Mammary epithelial cell (primary cell): ENCODE measurements at regions of chr13 and their contacts with region 1.

Region 1: DNA sequence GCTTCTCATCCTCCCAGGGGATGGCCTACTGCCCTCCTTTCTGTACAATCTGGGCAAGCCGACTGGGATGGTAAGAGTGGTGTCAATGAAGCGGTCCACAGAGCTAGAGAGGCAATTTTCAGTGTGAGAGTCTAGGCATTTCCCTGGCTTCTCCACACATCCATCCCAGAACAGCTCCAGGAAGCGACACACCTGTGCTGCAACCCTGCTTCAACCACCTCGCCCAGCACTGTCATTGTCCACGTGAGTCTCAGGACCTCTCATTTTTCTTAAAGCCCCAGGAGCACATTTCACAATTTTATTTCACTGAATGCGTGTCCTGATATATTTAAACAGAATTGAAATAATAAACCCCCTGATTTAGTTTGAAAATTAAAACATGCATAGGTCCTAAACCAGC is 15.5 kb upstream of the UBL3 start:
- DNase-seq: no peak
- H3K4me3 ChIP-seq: no peak overlapping the region
- H3K27ac ChIP-seq: no peak overlapping the region
- H3K4me1 ChIP-seq: peaks cover 16% of the 10 kb centered on the region
- H3K27me3 ChIP-seq: no peaks in the 10 kb centered on the region
- CTCF ChIP-seq: no peak

Region 2: DNA sequence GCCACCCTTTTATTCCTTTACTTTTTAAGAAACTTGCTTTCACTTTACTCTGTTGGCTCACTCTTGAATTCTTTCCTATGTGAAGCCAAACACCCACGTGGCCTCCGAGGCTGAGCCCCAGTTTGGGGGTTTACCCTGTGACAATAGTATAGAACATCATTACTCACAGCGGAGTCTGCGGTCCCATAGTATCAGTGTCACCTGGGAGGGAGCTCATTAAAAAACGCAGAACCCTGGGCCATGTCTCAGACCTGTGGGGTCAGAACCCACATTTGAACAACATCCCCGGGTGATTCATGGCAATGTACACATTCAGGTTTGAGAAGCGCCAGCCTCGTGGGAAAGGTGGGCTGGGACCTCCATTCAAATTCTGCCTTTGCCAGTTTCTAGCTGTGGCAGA is 20.5 kb after region 1 on chr13:
- CTCF ChIA-PET with region 1: no interaction called
- dilution Hi-C with region 1: no loop called
- in situ Hi-C with region 1: no loop called
- intact Hi-C with region 1: loop called (anchors 1 kb)
- DNase-seq: no peak
- H3K4me3 ChIP-seq: no peak overlapping the region
- H3K27ac ChIP-seq: no peak overlapping the region
- H3K4me1 ChIP-seq: no peaks in the 10 kb centered on the region
- H3K27me3 ChIP-seq: no peaks in the 10 kb centered on the region
- CTCF ChIP-seq: no peak